Sigmoid colon (tissue), 7 donors: ENCODE measurements at regions of chr12 and their contacts with region 1.

Region 1: GRCh38 chr12:43882578-43883178 is 46.8 kb downstream of the TMEM117 start:
- DNase-seq: no peak
- H3K4me3 ChIP-seq: no peak overlapping the region
- H3K27ac ChIP-seq: no peak overlapping the region
- H3K4me1 ChIP-seq: peaks cover 0 to 37% (median 12%) of the 10 kb centered on the region in 4 donors
- H3K27me3 ChIP-seq: no peaks in the 10 kb centered on the region
- CTCF ChIP-seq: peak; percentile 37 to 73 (median 66)
- EP300 ChIP-seq: no peak
- POLR2A ChIP-seq: no peak

Region 2: GRCh38 chr12:43444940-43445564 is 437.6 kb before region 1 on chr12:
- intact Hi-C with region 1: loop called (anchors 10 kb)
- DNase-seq: no peak
- H3K4me3 ChIP-seq: no peak overlapping the region
- H3K27ac ChIP-seq: no peak overlapping the region
- H3K4me1 ChIP-seq: no peaks in the 10 kb centered on the region
- H3K27me3 ChIP-seq: no peaks in the 10 kb centered on the region
- CTCF ChIP-seq: peak in 2 of 4 experiments; percentile 28 to 51
- EP300 ChIP-seq: no peak
- POLR2A ChIP-seq: no peak

Region 3: DNA sequence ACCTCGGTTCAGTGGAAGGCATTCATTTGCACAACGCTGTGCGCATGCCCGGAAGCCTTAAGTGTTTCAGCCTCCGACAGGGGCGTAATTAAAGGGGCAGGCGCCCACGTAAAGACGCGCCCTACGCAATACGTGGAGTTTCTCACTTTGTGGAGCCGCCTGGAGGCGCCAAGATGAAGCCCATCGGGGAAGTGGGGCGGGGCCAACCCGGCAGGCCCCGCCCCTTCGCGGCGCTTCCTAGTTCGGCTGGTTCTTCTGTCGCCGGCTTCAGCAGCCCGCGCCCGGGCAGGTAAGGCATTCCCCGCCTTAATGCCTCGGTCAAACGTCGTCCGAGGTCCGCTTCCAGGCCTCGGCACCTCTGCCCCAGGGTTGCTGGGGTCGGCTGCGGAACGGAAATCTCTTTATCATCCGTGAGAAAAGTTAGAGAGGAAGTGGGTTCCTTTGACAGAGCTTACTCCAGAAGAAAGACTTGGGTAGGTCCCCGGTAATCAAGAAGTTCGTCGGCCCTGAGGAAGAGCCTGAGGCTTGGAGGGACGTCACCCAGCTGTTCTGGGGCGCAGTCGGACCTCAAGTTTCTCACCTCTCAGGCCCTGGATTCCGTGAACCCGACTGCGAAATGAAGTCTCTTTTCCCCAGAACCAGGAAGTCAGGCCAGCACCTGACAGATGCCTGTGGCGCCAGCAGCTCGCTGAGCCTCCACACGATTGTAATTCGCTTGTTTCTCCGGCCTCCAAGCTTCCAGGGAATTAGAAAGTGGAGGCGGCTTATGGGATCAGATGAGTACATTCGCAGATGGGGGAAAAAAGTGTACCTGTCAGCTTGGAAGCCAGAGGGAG is 123.7 kb before region 1 on chr12 and contains the starts of genes IRAK4 and PUS7L:
- intact Hi-C with region 1: loop called (anchors 2 kb)
- DNase-seq: peak; percentile 98
- H3K4me3 ChIP-seq: peak within 1 kb of the TSS; percentile 51 to 77 (median 70)
- H3K27ac ChIP-seq: peak within 1 kb of the TSS; percentile 81 to 90 (median 82)
- H3K4me1 ChIP-seq: peaks cover 0 to 30% (median 20%) of the 10 kb centered on the region in 4 donors
- H3K27me3 ChIP-seq: no peaks in the 10 kb centered on the region
- CTCF ChIP-seq: peak in 3 of 4 experiments; percentile 14 to 48 (median 23)
- EP300 ChIP-seq: peak in 1 of 4 donors; percentile 16
- POLR2A ChIP-seq: peak; percentile 55 to 65
- total RNA-seq, gene IRAK4: 24.5 to 34.3 (median 26.5) TPM
- total RNA-seq, gene PUS7L: 6.3 to 17.1 (median 8.9) TPM

Region 4: GRCh38 chr12:43805860-43806736 is 76.6 kb before region 1 on chr12 and contains the start of gene TWF1:
- intact Hi-C with region 1: loop called (anchors 1 kb)
- DNase-seq: peak; percentile 91
- H3K4me3 ChIP-seq: peak within 1 kb of the TSS; percentile 80 to 97 (median 90)
- H3K27ac ChIP-seq: peak within 1 kb of the TSS; percentile 95 to 97 (median 96)
- H3K4me1 ChIP-seq: peaks cover 0 to 33% (median 26%) of the 10 kb centered on the region in 4 donors
- H3K27me3 ChIP-seq: no peaks in the 10 kb centered on the region
- CTCF ChIP-seq: peak in 3 of 4 experiments; percentile 27 to 45 (median 34)
- EP300 ChIP-seq: no peak
- POLR2A ChIP-seq: peak in 1 of 2 donors; percentile 10
- total RNA-seq, gene TWF1: 72.6 to 133 (median 101) TPM

Region 5: GRCh38 chr12:43835656-43836474 is 46.8 kb before region 1 on chr12 and contains the start of gene TMEM117:
- intact Hi-C with region 1: loop called (anchors 5 kb)
- DNase-seq: peak; percentile 84
- H3K4me3 ChIP-seq: peak within 1 kb of the TSS; percentile 69 to 80 (median 74)
- H3K27ac ChIP-seq: peak within 1 kb of the TSS; percentile 95 to 98 (median 96)
- H3K4me1 ChIP-seq: peaks cover 0 to 23% (median 13%) of the 10 kb centered on the region in 4 donors
- H3K27me3 ChIP-seq: no peaks in the 10 kb centered on the region
- CTCF ChIP-seq: no peak
- EP300 ChIP-seq: no peak
- POLR2A ChIP-seq: no peak
- total RNA-seq, gene TMEM117: 17.5 to 21.4 (median 18.9) TPM